Activated CD4-positive, alpha-beta memory T cell treated with anti-CD3 and anti-CD28 coated beads, Interleukin-2, amount 10 ng/mL, durations not matched to agents 7 days and 5 days (primary cell): ENCODE measurements at regions of chrX and their contacts with region 1.

Region 1: DNA sequence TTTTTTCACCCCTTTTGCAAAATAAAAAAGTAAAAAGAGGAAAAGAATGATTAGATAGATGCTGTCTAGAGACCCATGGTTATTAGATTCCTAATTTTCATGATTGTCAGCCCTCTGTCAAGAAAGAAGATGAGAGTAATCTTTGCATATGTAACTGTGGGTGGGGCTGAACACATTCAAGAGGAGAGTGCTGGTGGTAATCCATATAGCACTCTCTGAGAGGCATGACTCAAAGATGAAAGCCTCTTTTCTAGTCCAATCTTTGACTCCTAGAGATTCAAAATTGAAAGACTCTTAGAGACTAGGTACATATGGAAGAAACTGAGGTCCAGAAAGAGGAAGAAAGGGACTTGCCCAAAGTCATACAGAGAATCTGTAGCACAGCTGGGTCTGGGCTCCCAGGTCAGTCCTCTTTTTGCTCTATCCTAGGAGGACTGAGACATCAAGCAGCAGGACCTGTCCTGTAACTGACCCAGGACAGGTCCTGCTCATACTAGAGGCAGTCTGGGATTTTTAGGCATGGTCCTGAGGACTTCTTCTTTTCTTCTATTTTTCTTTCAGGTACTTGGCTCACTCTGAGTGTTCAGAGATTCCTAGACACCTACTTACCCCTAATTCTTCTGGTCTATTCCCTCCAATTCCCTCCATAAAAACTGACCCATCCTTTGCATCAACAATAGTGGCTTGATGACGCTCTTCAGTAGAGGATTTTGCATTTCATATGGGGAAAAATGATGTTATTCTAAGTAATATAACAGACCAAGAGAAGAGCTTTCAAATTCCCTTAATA is 23.8 kb downstream of the VSIG4 start:
- DNase-seq: no peak
- H3K4me3 Mint-ChIP-seq: peak overlapping the region; percentile 68
- H3K27ac Mint-ChIP-seq: peak overlapping the region; percentile 85
- H3K4me1 Mint-ChIP-seq: peaks cover 95% of the 10 kb centered on the region
- H3K27me3 Mint-ChIP-seq: no peaks in the 10 kb centered on the region

Region 2: GRCh38 chrX:65994519-65995506 is 21.3 kb before region 1 on chrX:
- CTCF ChIA-PET with region 1: no interaction called
- POLR2A ChIA-PET with region 1: no interaction called
- DNase-seq: no peak
- H3K4me3 Mint-ChIP-seq: no peak overlapping the region
- H3K27ac Mint-ChIP-seq: no peak overlapping the region
- H3K4me1 Mint-ChIP-seq: peaks cover 14% of the 10 kb centered on the region
- H3K27me3 Mint-ChIP-seq: no peaks in the 10 kb centered on the region

Region 3: GRCh38 chrX:66030505-66031317 is 14.6 kb after region 1 on chrX:
- CTCF ChIA-PET with region 1: interaction called, 10 read pairs
- POLR2A ChIA-PET with region 1: interaction called, 6 read pairs
- DNase-seq: no peak
- H3K4me3 Mint-ChIP-seq: no peak overlapping the region
- H3K27ac Mint-ChIP-seq: no peak overlapping the region
- H3K4me1 Mint-ChIP-seq: peaks cover 2% of the 10 kb centered on the region
- H3K27me3 Mint-ChIP-seq: no peaks in the 10 kb centered on the region